ENCODE measurements at regions of chr1 and their contacts with region 1.

Region 1: GRCh38 chr1:164786980-164787833 is 228.2 kb downstream of the PBX1 start:
- DNase-seq: peak; percentile 80 to 88
- H3K4me3 ChIP-seq: no peak overlapping the region
- H3K4me1 ChIP-seq: peaks cover 37% of the 10 kb centered on the region
- H3K27me3 ChIP-seq: no peaks in the 10 kb centered on the region

Region 2: DNA sequence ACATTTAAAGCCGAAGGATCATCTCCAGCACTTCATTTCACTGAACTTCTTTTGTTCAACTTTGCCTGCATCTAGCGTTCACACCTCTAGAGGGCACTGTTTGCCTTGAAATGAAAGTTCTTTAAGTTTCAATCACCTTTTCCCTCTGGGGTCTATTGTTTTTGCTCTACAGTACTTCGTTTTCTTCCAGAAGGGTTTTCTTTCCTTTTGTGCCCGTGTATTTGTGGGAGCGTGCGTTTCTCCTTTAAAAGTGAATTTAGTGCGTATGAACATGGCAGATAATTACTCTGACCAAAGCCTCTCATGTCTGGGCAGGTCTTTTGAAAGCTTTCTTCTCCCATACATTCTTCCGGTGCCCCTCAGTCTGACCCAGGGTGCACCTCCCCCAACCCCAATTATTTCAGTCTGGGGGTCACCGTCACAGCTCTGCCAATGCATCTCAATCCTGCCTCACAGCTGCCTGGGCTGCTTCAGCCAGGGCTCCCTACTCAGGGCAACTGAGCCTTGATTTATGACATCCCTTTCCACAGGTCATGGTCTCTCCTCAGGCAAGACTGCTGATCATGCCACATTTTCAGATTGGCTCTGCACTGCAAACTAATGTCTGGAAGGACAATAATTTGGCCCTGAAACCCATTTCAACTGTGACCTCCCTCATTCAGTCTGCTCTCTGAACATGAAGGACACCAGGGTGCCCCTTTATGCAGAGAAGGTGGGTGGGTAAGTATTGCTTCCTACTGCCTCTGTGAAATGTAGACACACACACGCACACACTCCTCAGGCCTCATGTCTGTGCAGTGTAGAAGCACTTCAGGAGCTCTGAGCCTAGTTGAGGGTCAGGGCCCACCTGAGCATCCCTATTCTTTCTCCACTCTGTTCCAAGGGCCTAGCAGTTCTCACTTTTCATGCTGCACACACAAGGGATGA is 1376.9 kb before region 1 on chr1:
- in situ Hi-C with region 1: loop called (anchors 25 kb)
- DNase-seq: peak; percentile 72 to 81
- H3K4me3 ChIP-seq: no peak overlapping the region
- H3K4me1 ChIP-seq: no peaks in the 10 kb centered on the region
- H3K27me3 ChIP-seq: no peaks in the 10 kb centered on the region

Region 3: DNA sequence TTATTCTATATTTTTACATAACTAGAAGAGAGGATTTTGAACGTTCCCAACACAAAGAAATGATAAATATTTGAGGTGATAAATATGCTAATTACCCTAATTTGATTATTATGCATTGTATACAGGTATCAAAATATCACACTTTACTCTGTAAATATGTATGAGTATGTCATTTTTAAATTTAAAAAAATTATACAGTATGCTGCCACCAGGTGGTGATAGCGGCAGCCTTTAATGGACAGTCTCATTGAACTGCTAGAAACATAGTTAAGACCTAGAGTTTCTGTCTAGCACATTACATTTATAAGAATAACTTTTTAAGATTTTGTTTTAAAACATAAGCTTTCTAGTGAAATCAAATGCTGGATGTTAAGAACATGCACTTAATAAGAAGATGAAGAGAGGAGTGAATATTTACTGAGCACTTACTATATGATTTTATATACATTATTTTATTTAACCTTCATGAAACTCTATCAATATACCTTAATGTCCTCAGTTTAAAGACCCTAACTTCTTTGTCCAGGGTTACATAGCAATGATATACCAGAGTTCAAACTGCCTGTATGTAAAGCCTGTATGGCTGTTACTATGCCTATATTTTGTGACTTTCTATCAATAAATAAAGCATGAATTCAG is 1258.4 kb before region 1 on chr1:
- in situ Hi-C with region 1: loop called (anchors 25 kb)
- DNase-seq: peak; percentile 19 to 46
- H3K4me3 ChIP-seq: no peak overlapping the region
- H3K4me1 ChIP-seq: no peaks in the 10 kb centered on the region
- H3K27me3 ChIP-seq: no peaks in the 10 kb centered on the region

Region 4: DNA sequence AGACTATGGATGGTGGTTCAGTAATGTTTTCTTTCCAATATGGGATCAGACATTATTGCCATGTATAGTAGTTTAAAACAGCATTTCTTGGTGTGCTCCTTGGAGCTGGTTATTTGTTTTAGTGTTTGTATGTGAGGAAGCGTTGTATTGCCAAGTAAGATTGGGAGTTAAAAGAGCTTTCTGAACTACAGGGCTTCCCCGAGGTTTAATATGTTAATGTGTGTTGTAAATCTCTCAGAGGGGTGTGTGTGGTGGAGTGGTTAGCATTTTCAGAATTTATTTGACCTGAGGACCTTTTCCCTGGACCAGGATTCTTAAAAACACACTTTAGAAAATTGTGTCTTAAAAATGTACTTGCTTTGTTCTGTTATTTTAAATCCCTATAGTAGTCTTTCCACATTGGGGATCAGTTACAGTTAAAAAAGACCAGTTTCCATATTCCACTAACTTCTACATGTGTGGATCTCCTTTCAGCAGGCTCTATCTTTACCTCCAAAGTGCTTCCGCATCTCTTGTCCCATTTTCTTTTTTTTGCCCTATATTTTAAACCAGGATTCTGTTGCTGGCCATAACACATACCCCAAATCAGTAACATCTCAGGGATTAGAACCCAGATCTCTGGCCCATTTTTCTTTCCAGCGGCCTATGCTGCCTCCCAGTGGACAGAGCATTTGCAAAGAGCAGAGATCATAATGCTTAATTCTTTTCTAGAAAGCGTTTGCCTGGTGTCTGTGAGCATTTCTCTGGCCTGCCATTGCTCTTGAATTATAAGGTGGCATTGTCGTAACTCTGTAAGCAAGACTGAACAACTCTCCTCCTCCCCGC is 169.6 kb before region 1 on chr1:
- in situ Hi-C with region 1: loop called (anchors 10 kb)
- DNase-seq: peak; percentile 48 to 64
- H3K4me3 ChIP-seq: no peak overlapping the region
- H3K4me1 ChIP-seq: peaks cover 14% of the 10 kb centered on the region
- H3K27me3 ChIP-seq: no peaks in the 10 kb centered on the region

Region 5: DNA sequence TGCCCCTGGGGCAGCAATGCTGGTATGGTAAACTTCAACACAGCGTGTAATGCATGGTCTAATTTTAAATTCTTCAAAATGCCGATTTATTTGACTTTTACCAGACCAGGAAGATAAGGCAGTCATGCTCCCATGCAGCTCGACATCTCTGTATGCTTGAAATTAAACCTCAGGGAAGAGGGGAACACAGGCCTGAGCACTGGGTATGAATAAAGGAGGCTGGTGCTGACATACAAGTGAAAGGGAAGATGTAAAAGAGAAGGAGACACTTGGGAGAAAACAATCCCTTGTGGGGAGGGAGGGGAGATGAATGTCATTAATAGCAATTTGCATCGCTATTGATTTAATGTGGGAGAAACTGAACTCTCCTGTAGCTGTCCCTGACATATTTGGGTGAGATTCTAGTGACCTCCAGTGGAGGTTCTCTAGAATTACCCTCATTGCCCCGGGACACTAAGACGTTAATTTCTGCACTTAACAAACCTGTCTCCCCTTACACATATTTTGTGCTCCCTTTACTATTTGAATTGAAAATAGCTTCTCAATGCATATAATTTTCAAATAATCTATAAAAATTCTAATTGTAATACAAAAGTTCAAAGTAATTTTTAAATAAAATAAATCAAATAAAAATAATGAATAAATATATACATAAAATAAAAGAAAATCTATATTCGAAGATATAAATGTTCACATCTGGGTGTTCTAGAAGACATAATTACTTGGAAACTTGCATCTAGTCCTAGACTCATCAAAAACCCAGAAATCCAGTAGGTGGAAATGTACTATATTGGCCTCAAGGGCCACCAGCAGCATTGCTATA is 286.2 kb after region 1 on chr1:
- in situ Hi-C with region 1: loop called (anchors 5 kb)
- DNase-seq: peak; percentile 47 to 84
- H3K4me3 ChIP-seq: no peak overlapping the region
- H3K4me1 ChIP-seq: peaks cover 16% of the 10 kb centered on the region
- H3K27me3 ChIP-seq: no peaks in the 10 kb centered on the region